ENCODE measurements at regions of chr1 and their contacts with region 1.

Region 1: DNA sequence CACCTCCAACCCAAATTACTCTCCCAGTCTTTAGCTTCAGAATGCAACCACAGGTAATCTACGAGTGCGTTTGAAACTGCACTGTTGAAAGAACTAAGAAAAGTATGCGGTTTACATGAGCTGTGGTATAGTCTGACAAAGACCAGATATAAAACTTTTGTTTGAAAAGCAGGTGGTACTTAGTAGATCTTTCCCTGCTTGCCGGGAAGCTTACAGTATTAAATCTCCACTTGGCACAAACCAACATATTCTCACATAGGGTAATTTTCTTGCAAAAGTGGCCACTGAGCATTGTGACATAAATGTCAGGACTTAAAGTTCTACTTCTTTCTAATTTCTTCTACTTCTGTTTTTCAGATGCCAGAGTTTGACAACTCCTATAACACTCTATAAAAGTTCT is 8.4 kb downstream of the RGS2 start:
- DNase-seq: no peak
- ATAC-seq: no peak
- H3K4me3 ChIP-seq: no peak overlapping the region
- H3K27ac ChIP-seq: no peak overlapping the region
- H3K4me1 ChIP-seq: peaks cover 0 to 2% (median 0%) of the 10 kb centered on the region in 9 donors
- H3K27me3 ChIP-seq: no peaks in the 10 kb centered on the region
- CTCF ChIP-seq: no peak

Region 2: DNA sequence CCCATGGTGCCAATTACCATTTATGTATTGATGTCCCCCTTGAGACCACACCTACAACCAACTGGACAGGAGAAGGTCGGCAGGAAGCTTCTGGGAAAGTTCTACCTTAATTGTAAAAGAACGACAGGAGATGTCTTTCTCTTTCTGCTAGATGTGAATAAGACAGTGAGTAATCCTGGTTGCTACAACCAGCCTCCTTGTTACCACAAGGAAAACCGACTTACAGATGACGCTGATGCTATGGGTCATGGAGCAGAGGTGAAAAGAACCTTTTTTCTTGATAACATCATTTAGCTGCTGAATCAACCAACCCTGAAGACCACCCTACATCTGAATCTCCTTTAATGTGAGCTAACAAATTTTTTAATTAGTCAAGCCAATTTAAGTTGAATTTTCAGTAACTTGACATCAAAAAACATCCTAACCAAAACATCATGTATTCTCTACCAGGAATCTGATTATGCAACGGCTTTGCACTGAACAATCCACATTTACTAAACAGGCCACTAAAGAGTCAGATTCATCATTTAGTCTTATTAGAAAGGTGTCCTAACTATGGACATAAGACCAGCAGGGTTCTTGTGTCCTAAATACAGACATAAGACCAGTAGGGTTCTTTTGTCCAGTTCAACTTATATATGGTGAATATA is 14.6 kb after region 1 on chr1:
- intact Hi-C with region 1: loop called in 1 of 10 experiments (anchors 2 kb)
- DNase-seq: no peak
- ATAC-seq: no peak
- H3K4me3 ChIP-seq: no peak overlapping the region
- H3K27ac ChIP-seq: no peak overlapping the region
- H3K4me1 ChIP-seq: peaks cover 0 to 17% (median 10%) of the 10 kb centered on the region in 9 donors
- H3K27me3 ChIP-seq: no peaks in the 10 kb centered on the region
- CTCF ChIP-seq: no peak

Region 3: GRCh38 chr1:192860478-192861185 is 43.4 kb after region 1 on chr1:
- intact Hi-C with region 1: loop called in 1 of 10 experiments (anchors 1 kb)
- DNase-seq: no peak
- ATAC-seq: peak in 2 of 8 donors; percentile 44 to 56
- H3K4me3 ChIP-seq: no peak overlapping the region
- H3K27ac ChIP-seq: no peak overlapping the region
- H3K4me1 ChIP-seq: peaks cover 0 to 6% (median 0%) of the 10 kb centered on the region in 9 donors
- H3K27me3 ChIP-seq: no peaks in the 10 kb centered on the region
- CTCF ChIP-seq: no peak

Region 4: DNA sequence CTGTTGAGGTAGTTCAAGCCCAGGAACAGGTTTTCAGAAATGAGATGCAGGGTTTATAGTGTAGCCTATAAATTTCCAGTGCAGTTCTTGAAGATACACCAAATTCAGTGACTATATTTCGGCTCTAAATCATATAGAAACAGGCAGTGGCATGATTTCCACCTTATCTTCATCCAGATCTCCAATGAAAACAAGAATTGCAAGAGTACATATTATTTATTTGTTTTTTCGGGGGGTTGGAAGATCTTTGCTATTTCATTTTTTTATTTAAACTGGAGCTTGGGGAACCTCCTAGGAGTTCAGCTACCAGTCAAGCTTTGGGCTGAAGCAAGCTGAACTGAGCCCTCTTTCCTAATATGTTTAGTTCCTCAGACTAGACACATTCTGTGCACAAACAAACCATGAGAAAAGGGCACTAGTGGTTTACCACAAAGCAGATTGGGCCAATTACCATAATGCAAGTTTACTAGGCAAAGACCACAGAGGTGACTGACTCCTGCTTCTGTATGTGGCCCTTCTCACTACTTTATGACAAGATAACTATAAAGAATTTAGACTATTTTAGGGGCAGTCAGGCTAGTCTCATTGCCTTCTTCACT is 60.1 kb after region 1 on chr1:
- intact Hi-C with region 1: no loop called
- DNase-seq: no peak
- ATAC-seq: peak in 1 of 8 donors; percentile 24
- H3K4me3 ChIP-seq: no peak overlapping the region
- H3K27ac ChIP-seq: peak overlapping the region in 5 of 10 donors; percentile 17 to 76 (median 61)
- H3K4me1 ChIP-seq: peaks cover 0 to 53% (median 26%) of the 10 kb centered on the region in 9 donors
- H3K27me3 ChIP-seq: no peaks in the 10 kb centered on the region
- CTCF ChIP-seq: no peak